Posterior cingulate gyrus (tissue), 11 donors: ENCODE measurements at regions of chr18 and their contacts with region 1.

Region 1: GRCh38 chr18:63367053-63367953 is at the start of gene KDSR:
- DNase-seq: peak; percentile 84 to 98 (median 92)

Region 2: DNA sequence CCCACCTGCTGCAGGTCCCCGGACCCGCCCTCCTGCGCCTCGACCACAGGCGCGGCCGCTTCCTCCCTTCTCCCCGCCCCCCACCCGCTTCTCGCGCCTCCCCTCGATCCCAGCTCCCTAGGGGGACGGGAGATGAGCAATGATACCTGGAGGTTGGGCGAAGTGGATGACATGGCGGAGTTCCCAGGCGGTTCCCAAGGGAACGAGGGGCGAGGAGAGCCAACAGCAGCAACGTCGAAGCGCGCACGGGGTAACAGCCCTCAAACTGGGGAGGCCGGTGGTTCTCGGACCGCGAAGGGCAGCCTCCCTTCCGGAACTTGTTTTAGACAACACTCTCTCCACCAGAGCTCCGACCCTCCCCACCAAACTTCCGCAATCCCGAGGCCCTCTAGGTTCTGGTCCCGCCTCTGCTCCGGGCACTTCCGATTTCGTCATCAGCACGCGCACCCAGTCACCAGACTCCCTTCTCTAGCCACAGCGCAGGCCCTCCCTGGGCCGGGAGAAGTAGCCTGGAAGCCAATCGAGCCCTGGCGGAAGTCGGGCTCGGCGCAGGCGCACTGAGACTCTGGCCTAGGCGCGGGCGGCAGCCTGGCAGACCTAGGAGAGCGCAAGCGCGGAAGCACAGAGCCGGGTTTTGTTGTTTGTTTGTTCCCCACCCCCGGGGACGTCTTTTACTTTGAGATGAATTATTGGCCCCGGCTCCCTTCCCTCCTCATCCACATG is 54.9 kb after region 1 on chr18 and contains the start of gene VPS4B:
- intact Hi-C with region 1: loop called (anchors 1 kb)
- DNase-seq: peak; percentile 99 to 100 (median 100)

Region 3: DNA sequence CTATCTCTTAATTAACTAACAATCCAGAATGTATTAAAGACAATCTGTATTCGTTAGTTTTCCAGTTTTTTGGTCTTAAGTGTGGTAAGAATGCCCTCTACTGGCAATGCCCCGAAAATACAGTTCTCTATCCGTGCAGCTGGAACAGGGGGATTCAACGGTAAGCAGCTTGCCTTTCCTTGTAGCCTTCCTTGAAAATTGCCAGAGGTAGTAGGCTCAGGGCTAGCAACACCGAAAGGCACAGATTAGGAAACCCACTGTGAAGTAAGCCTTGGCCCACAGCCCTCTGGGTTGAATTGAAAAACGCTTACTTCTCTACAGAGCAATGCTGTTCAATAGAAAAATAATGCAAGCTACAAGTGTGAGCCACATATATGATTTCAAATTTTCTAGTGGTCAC is 72.0 kb after region 1 on chr18:
- intact Hi-C with region 1: loop called (anchors 5 kb)
- DNase-seq: peak in 4 of 10 donors; percentile 34 to 53 (median 41)